Activated CD8-positive, alpha-beta T cell treated with anti-CD3 and anti-CD28 coated beads for 36 hours (primary cell): ENCODE measurements at regions of chr4 and their contacts with region 1.

Region 1: DNA sequence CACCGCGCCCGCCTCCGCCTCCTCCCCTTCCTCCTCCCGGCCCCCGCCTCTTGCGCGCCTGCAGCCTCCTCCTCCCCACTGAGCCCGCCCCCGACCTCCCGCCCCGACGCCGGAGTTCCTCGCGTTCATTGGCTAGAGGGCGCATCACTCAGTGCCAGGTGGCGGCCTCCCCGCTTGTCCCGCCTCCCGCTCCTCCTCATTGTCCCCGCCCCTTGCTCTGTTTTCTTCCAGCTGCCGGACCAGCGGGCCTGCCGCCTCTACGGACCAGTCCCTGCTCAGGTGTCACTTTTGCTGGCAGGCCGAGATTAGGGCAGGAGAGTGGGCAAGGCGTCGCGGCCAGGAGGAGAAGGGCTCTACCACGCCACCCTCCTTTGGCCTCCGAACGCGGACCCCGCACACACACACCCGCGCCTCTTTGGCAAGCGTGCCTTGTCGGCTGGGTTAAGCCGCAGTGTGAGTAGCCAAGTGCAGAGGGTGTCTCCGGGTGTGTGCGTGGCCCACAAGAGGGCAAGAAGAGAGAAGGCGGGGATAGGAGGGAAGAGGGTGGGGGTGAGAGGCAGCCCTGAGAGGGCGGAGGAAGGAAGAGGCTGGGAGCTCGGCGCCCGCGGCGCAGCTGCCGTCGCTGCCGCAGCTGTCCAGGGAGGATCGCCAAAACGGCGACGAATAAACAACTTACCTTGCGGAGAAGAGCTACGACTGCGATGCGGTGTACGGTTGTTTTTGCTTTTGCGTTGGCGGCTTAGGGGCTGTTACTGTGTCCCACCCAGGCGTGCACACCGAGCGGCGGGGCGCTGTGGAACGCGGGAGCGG is 436 bp upstream of the PPP3CA start:
- DNase-seq: peak; percentile 98
- ATAC-seq: peak; percentile 93
- H3K4me3 Mint-ChIP-seq: peak overlapping the region; percentile 95
- H3K27ac Mint-ChIP-seq: peak overlapping the region; percentile 87
- H3K4me1 Mint-ChIP-seq: peaks cover 30% of the 10 kb centered on the region
- H3K27me3 Mint-ChIP-seq: peaks cover 19% of the 10 kb centered on the region
- CTCF ChIP-seq: no peak

Region 2: DNA sequence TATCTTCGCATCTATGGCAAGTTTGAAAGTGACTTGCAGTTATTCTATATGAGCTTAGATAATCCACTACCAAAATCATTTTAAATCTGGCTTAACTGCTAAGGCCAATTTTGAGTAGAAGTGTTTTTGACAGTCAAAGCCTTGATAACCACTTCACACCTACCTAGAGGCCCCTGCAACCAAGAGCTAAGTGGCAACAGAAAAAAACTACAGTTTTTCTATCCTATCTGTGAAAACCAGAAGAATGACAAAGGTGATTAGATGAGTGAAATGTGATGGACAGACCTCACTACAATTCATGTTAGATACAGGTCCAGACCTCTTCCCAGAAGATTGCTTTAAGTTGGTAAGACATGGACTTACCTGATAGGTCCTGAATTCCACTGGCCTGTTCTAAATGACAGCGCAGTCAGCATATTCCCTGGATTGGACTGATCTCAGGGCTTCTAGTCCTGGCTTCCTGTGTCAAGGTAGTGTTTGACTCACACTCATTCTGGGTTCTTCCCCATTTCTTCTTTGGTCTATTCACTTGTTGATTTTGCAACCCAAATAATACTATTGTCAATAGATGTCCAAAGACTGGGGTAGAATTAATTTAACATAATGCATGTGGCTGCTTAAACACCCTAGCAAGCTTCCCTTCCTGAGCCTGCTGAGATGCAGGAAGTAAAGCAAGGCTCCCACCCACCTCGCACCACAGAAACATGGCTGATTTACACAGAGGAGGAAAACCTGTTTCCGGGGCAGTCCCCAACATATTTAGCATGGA is 65.5 kb before region 1 on chr4:
- CTCF ChIA-PET with region 1: no interaction called
- POLR2A ChIA-PET with region 1: no interaction called
- intact Hi-C with region 1: loop called (anchors 5 kb)
- DNase-seq: peak; percentile 75
- ATAC-seq: peak; percentile 83
- H3K4me3 Mint-ChIP-seq: no peak overlapping the region
- H3K27ac Mint-ChIP-seq: no peak overlapping the region
- H3K4me1 Mint-ChIP-seq: peaks cover 47% of the 10 kb centered on the region
- H3K27me3 Mint-ChIP-seq: no peaks in the 10 kb centered on the region
- CTCF ChIP-seq: no peak

Region 3: GRCh38 chr4:101419324-101420135 is 71.8 kb after region 1 on chr4:
- CTCF ChIA-PET with region 1: no interaction called
- POLR2A ChIA-PET with region 1: interaction called, 3 read pairs
- intact Hi-C with region 1: loop called (anchors 5 kb)
- DNase-seq: peak; percentile 40
- ATAC-seq: peak; percentile 35
- H3K4me3 Mint-ChIP-seq: no peak overlapping the region
- H3K27ac Mint-ChIP-seq: peak overlapping the region; percentile 46
- H3K4me1 Mint-ChIP-seq: peaks cover 42% of the 10 kb centered on the region
- H3K27me3 Mint-ChIP-seq: peaks cover 24% of the 10 kb centered on the region
- CTCF ChIP-seq: no peak

Region 4: GRCh38 chr4:101527188-101527587 is 179.4 kb after region 1 on chr4:
- CTCF ChIA-PET with region 1: no interaction called
- POLR2A ChIA-PET with region 1: no interaction called
- intact Hi-C with region 1: loop called (anchors 10 kb)
- DNase-seq: peak; percentile 89
- ATAC-seq: peak; percentile 98
- H3K4me3 Mint-ChIP-seq: no peak overlapping the region
- H3K27ac Mint-ChIP-seq: peak overlapping the region; percentile 21
- H3K4me1 Mint-ChIP-seq: peaks cover 26% of the 10 kb centered on the region
- H3K27me3 Mint-ChIP-seq: peaks cover 38% of the 10 kb centered on the region
- CTCF ChIP-seq: no peak